ENCODE measurements at regions of chr1 and their contacts with region 1.

Region 1: GRCh38 chr1:201275041-201275676 is 8.1 kb upstream of the PKP1 start:
- DNase-seq: peak; percentile 89

Region 2: GRCh38 chr1:201214461-201214860 is 60.7 kb before region 1 on chr1:
- intact Hi-C with region 1: no loop called
- DNase-seq: peak; percentile 19

Region 3: GRCh38 chr1:201329286-201329685 is 54.1 kb after region 1 on chr1:
- intact Hi-C with region 1: no loop called
- DNase-seq: peak; percentile 53

Region 4: DNA sequence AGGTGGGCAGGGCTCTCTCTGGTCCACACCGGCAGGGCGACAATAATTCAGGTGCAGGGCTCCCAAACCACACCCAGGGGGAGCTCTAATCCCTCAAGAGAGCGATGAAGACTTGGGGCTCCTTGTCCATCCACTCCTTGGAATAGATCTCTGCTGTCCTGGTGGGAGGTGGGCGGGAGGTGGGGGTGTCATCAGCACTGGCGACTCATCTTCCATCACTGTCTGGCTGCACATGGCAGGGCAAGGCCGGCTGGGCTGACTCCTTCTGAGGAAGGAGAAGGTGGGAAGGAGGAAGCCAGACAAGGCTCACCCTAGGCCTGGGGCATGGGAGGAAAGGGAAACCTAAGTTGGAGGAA is 73.0 kb after region 1 on chr1:
- intact Hi-C with region 1: loop called (anchors 5 kb)
- DNase-seq: peak; percentile 77

Region 5: GRCh38 chr1:201399352-201400126 is 124.4 kb after region 1 on chr1:
- intact Hi-C with region 1: loop called (anchors 5 kb)
- DNase-seq: no peak